ENCODE measurements at regions of chr11 and their contacts with region 1.

Region 1: GRCh38 chr11:63938479-63939396 is at the start of gene NAA40:
- DNase-seq: peak; percentile 98
- H3K4me3 ChIP-seq: peak within 1 kb of the TSS; percentile 72 to 92 (median 81)
- H3K27ac ChIP-seq: peak within 1 kb of the TSS; percentile 75
- H3K4me1 ChIP-seq: peaks cover 9% of the 10 kb centered on the region
- H3K27me3 ChIP-seq: no peaks in the 10 kb centered on the region
- CTCF ChIP-seq: no peak
- total RNA-seq, gene NAA40: 16.3 to 20.2 TPM

Region 2: GRCh38 chr11:63888170-63889086 is 50.3 kb before region 1 on chr11:
- CTCF ChIA-PET with region 1: no interaction called
- dilution Hi-C with region 1: no loop called
- in situ Hi-C with region 1: no loop called
- intact Hi-C with region 1: loop called (anchors 5 kb)
- DNase-seq: peak; percentile 87
- H3K4me3 ChIP-seq: peak overlapping the region; percentile 47 to 53 (median 53)
- H3K27ac ChIP-seq: peak overlapping the region; percentile 85
- H3K4me1 ChIP-seq: peaks cover 34% of the 10 kb centered on the region
- H3K27me3 ChIP-seq: no peaks in the 10 kb centered on the region
- CTCF ChIP-seq: no peak

Region 3: DNA sequence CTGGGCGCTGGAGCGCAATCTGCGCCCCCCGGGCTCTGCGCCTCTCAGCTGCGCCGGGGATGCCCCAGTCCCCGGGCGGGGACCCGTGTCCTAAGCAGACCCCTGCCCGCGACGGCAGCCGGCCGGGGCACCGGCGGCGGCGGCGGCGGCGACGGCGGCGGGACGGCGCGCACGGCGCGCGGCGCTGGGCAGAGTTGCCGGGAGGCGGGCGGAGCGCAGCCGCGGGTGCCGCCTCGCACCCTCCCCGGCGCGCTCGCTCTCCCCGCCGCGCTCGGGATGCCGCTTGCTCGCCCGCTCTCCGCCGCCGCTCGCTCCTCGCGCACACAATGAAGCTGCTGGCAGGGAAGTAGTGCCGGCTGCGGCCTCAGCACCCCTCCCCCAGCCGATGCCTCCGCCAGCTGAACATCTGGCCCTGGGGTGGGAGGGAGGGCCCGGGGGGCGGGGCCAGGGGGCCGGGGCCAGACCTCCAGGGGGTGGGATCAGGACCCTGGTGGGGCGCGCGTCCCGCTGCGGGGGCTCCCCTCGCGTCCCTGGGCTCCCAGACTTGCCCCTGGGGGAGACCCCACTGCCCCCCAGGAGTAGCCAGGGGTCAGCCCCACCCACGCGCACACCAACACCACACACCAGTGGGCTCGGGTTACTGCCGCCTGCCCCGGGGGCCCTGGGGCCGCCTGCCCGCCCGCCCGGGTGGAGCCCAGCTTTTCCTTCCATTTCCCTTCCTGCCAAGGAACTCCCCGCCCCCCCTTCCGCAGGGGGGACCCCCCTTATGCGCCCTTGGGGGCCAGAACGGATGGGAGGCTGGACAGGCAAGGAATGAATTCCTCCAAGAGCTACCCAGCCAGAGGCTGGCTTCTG is 21.7 kb before region 1 on chr11 and contains the start of gene RCOR2:
- CTCF ChIA-PET with region 1: interaction called, 4 read pairs
- dilution Hi-C with region 1: no loop called
- in situ Hi-C with region 1: no loop called
- intact Hi-C with region 1: loop called (anchors 1 kb)
- DNase-seq: peak; percentile 60
- H3K4me3 ChIP-seq: peak within 1 kb of the TSS; percentile 39 to 43 (median 40)
- H3K27ac ChIP-seq: no peak within 1 kb of the TSS
- H3K4me1 ChIP-seq: peaks cover 14% of the 10 kb centered on the region
- H3K27me3 ChIP-seq: peaks cover 9% of the 10 kb centered on the region
- CTCF ChIP-seq: no peak
- total RNA-seq, gene RCOR2: 0.14 to 0.17 TPM

Region 4: DNA sequence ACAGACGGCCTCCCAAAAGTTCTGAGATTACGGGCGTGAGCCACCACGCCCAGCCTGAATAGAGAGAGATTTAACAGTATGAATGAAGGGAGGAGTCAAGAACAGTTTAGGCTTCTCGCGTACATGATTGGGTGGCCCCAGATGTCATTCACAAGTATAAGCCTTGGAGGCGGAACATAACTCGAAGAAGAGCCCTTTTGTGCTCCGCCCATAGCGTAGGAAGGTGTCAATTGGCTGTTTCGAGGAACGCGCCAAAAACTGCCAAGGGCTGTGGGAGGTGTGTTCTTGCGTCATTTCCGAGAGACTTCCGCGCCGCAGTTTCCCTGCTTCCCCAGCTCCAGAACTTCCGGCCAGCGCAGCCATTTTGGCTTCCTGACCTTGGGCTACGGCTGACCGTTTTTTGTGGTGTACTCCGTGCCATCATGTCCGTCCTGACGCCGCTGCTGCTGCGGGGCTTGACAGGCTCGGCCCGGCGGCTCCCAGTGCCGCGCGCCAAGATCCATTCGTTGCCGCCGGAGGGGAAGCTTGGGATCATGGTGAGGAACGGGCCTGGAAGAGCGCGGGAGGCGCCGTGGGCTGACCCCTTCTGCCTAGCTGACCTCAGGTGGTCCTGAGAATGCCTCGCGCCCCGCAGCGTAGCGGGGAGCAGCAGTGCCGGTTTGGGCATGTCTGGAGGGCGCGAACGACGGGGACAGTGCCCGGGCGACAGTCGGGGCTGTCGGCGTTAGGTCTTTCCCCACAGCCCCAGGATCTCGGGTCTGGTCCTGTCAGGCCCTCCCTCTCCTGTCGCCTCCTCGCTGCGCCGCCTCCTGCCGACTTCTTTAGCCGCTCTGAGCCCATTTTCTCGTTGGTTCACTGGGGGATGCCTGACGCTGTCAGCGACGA is 35.8 kb after region 1 on chr11 and contains the start of gene COX8A:
- CTCF ChIA-PET with region 1: no interaction called
- dilution Hi-C with region 1: loop called (anchors 5 kb)
- in situ Hi-C with region 1: no loop called
- intact Hi-C with region 1: loop called (anchors 1 kb)
- DNase-seq: peak; percentile 100
- H3K4me3 ChIP-seq: peak within 1 kb of the TSS; percentile 88 to 100 (median 100)
- H3K27ac ChIP-seq: peak within 1 kb of the TSS; percentile 87
- H3K4me1 ChIP-seq: peaks cover 10% of the 10 kb centered on the region
- H3K27me3 ChIP-seq: no peaks in the 10 kb centered on the region
- CTCF ChIP-seq: peak in 1 of 2 donors; percentile 28
- total RNA-seq, gene COX8A: 185 to 338 TPM

Region 5: DNA sequence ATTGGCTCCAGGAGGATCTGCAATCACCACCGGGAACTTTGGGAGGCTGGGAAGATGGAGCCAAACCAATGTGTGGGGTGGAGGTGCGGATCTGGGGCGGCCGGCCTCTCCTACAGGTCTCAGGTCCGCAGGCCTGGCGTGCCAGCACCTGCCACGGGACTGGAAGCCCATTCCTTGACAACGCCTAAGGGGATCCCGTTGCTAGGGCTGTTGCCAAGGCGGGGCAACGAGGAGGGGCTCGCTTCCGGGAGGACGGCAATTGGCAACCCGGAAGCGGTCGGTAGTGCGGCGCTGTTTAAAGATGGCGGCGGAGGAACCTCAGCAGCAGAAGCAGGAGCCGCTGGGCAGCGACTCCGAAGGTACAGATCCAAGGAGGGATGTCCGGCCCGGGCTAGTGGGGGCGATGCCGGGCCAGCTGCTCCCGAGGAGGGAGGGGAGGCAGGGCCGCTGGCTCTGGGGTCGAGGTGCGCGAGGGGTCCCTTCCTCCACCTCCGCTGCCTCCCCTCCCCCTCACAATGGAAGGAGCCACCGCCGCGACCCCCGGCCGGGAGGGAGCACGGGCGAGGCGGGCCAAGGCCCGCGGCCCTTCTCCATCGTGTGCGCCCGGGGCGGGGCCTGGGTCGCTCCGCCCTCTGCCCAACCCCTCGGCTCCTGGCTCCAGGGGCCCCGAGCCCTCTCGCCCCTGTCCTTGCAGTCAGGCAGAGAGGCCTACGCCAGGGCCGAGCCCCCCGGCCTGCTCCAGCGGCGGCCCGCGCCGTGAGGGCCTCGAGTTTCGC is 47.6 kb after region 1 on chr11 and contains the start of gene OTUB1:
- CTCF ChIA-PET with region 1: no interaction called
- dilution Hi-C with region 1: no loop called
- in situ Hi-C with region 1: no loop called
- intact Hi-C with region 1: loop called (anchors 2 kb)
- DNase-seq: peak; percentile 97
- H3K4me3 ChIP-seq: peak within 1 kb of the TSS; percentile 83 to 99 (median 89)
- H3K27ac ChIP-seq: peak within 1 kb of the TSS; percentile 76
- H3K4me1 ChIP-seq: peaks cover 20% of the 10 kb centered on the region
- H3K27me3 ChIP-seq: no peaks in the 10 kb centered on the region
- CTCF ChIP-seq: no peak
- total RNA-seq, gene OTUB1: 48.0 to 101 TPM

Measured in mammary epithelial cell (primary cell).